ENCODE measurements at regions of chr2 and their contacts with region 1.

Region 1: GRCh38 chr2:62195421-62196277 is at the start of gene B3GNT2:
- DNase-seq: peak; percentile 56
- ATAC-seq: peak; percentile 75
- H3K4me3 ChIP-seq: peak within 1 kb of the TSS; percentile 76 to 96 (median 96)
- H3K27ac ChIP-seq: peak within 1 kb of the TSS; percentile 86
- H3K4me1 ChIP-seq: peaks cover 68% of the 10 kb centered on the region
- H3K27me3 ChIP-seq: no peaks in the 10 kb centered on the region; a peak in 1 of 5 replicates
- CTCF ChIP-seq: no peak
- EP300 ChIP-seq: no peak
- POLR2A ChIP-seq: peak; percentile 84 to 95
- RAD21 ChIP-seq: peak; percentile 61
- total RNA-seq, gene B3GNT2: 19.5 and 28.5 TPM in 2 replicates

Region 2: GRCh38 chr2:62234755-62235655 is 39.4 kb after region 1 on chr2:
- CTCF ChIA-PET with region 1: no interaction called
- POLR2A ChIA-PET with region 1: no interaction called
- in situ Hi-C with region 1: no loop called
- intact Hi-C with region 1: loop called (anchors 5 kb)
- DNase-seq: no peak
- ATAC-seq: peak; percentile 13
- H3K4me3 ChIP-seq: no peak overlapping the region
- H3K27ac ChIP-seq: no peak overlapping the region
- H3K4me1 ChIP-seq: peaks cover 16% of the 10 kb centered on the region
- H3K27me3 ChIP-seq: no peaks in the 10 kb centered on the region
- CTCF ChIP-seq: no peak
- EP300 ChIP-seq: no peak
- POLR2A ChIP-seq: no peak
- RAD21 ChIP-seq: no peak

Region 3: GRCh38 chr2:62293490-62294271 is 98.0 kb after region 1 on chr2:
- CTCF ChIA-PET with region 1: no interaction called
- POLR2A ChIA-PET with region 1: interaction called, 3 read pairs
- in situ Hi-C with region 1: no loop called
- intact Hi-C with region 1: loop called (anchors 2 kb)
- DNase-seq: peak; percentile 51
- ATAC-seq: peak; percentile 87
- H3K4me3 ChIP-seq: peak overlapping the region; percentile 50 to 78 (median 59)
- H3K27ac ChIP-seq: no peak overlapping the region
- H3K4me1 ChIP-seq: peaks cover 29% of the 10 kb centered on the region
- H3K27me3 ChIP-seq: no peaks in the 10 kb centered on the region; a peak in 1 of 5 replicates
- CTCF ChIP-seq: peak; percentile 6; the same call in 1 of the 2 replicates
- EP300 ChIP-seq: no peak
- POLR2A ChIP-seq: 0 out of 4 replicates have a peak, but pooled peaks of 1 of the 2 experiments have one; percentile 16
- RAD21 ChIP-seq: 0 out of 2 replicates have a peak, but pooled peaks have one; percentile 21

Region 4: GRCh38 chr2:62306751-62307468 is 111.3 kb after region 1 on chr2:
- CTCF ChIA-PET with region 1: no interaction called
- POLR2A ChIA-PET with region 1: no interaction called
- in situ Hi-C with region 1: no loop called
- intact Hi-C with region 1: no loop called
- DNase-seq: no peak
- ATAC-seq: peak; percentile 56
- H3K4me3 ChIP-seq: no peak overlapping the region
- H3K27ac ChIP-seq: no peak overlapping the region
- H3K4me1 ChIP-seq: peaks cover 43% of the 10 kb centered on the region
- H3K27me3 ChIP-seq: peaks cover 0 to 2% of the 10 kb centered on the region in 2 experiments; a peak in 3 of 5 replicates
- CTCF ChIP-seq: no peak
- EP300 ChIP-seq: no peak
- POLR2A ChIP-seq: no peak
- RAD21 ChIP-seq: no peak

Region 5: DNA sequence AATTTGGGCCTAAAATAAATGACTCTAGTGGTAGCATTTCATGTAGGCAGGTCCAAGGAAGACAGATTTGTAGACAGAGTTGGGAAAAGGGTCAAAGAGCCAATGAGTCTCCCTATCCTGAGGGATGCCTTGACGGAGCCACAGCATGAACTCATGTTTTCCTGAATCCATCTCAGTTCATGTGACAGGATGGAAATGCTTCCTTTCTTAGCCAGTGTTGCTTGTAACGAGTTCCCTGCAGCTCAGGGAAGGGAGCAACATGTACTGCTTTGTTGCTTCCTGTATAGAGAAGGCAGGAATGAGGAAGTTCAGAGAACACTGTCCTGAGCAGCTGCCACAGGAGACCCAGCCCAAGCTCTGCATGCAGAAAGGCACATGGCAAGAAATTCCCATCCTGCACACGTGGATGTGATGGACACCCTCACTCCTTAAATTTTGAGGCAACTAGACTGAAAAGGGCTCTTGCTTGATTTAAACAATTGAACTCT is 282.5 kb after region 1 on chr2:
- CTCF ChIA-PET with region 1: no interaction called
- POLR2A ChIA-PET with region 1: no interaction called
- in situ Hi-C with region 1: no loop called
- intact Hi-C with region 1: no loop called
- DNase-seq: peak; percentile 60
- ATAC-seq: peak; percentile 91
- H3K4me3 ChIP-seq: no peak overlapping the region
- H3K27ac ChIP-seq: no peak overlapping the region
- H3K4me1 ChIP-seq: peaks cover 44% of the 10 kb centered on the region
- H3K27me3 ChIP-seq: no peaks in the 10 kb centered on the region
- CTCF ChIP-seq: no peak
- EP300 ChIP-seq: no peak
- POLR2A ChIP-seq: no peak
- RAD21 ChIP-seq: no peak

Measured in HepG2 (cell line).